CD8-positive, alpha-beta memory T cell (primary cell): ENCODE measurements at regions of chr10 and their contacts with region 1.

Region 1: DNA sequence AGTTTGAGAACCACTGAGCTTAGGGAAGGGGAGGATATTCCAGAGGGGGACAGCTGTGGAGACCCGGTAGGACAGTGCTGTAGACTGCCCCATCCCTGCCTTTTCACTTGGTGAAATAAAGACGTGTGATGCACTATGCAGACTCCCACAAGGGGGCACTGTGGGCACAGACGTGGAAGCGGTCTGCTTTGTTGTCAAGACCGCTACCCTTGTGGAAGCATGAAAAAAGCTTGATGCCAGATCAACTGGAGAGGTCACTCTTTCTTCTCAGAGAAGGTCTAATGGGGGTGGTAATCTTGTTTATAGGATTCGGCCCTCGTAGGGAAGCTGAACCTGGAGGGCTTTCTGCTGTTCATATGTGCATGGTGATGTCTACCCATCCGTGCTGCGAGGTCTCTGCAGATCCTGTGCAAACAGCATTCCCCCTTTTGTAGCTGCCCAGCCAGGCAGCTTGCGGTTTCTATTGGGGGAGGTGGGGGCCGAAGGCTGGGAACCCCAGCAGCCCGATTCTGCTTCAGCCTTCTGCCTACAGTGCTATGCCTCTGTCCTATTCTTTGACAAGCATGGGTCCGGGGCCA is 13.7 kb downstream of the RPS24 start:
- DNase-seq: peak; percentile 61 to 81 (median 69)
- H3K4me3 ChIP-seq: no peak overlapping the region
- H3K4me3 Mint-ChIP-seq: no peak overlapping the region
- H3K27ac ChIP-seq: no peak overlapping the region
- H3K27ac Mint-ChIP-seq: peak overlapping the region in 2 of 8 donors; percentile 27 to 62
- H3K4me1 ChIP-seq: peaks cover 4% of the 10 kb centered on the region
- H3K4me1 Mint-ChIP-seq: peaks cover 8 to 23% (median 19%) of the 10 kb centered on the region in 3 donors
- H3K27me3 ChIP-seq: no peaks in the 10 kb centered on the region
- H3K27me3 Mint-ChIP-seq: no peaks in the 10 kb centered on the region

Region 2: GRCh38 chr10:77959384-77959783 is 88.0 kb before region 1 on chr10:
- CTCF ChIA-PET with region 1: no interaction called
- POLR2A ChIA-PET with region 1: no interaction called
- DNase-seq: no peak
- H3K4me3 ChIP-seq: no peak overlapping the region
- H3K4me3 Mint-ChIP-seq: no peak overlapping the region
- H3K27ac ChIP-seq: no peak overlapping the region
- H3K27ac Mint-ChIP-seq: no peak overlapping the region
- H3K4me1 ChIP-seq: no peaks in the 10 kb centered on the region
- H3K4me1 Mint-ChIP-seq: no peaks in the 10 kb centered on the region
- H3K27me3 ChIP-seq: no peaks in the 10 kb centered on the region
- H3K27me3 Mint-ChIP-seq: peaks cover 10 to 27% of the 10 kb centered on the region in 2 donors

Region 3: DNA sequence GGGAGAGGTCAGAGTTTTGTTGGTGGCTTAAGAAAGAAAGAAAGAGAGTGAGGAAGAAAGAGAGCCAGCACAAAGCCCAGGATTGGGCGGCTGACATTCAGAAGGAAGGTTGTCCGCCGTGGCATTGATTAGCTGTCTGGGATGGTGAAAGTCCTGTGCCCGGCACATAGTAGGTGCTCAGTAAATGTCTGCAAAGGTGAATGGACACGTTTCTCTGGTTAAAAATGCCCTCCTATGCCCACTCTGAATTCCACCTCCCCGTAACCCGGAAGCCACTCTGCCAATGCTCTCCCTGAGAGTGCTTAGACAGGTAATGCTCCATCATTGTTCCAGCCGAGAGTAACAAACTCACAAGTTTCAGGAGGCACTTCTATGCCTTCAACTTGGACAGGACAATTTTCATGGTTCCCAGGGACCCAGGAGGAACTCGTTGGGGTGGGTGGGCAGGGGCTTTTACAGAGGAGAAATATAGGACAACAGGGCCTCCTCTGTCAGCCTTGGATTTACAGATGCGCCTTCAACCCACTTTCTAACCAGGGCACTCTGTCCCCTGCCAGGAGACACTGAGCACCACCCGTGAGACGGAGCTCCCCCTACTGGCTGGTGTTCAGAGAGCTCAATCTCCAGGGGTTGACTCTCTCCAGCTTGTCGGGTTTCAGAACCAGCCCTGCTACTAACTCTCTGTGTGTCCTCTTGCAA is 609.9 kb after region 1 on chr10:
- CTCF ChIA-PET with region 1: interaction called, 17 read pairs
- POLR2A ChIA-PET with region 1: no interaction called
- DNase-seq: peak; percentile 22 to 69 (median 31)
- H3K4me3 ChIP-seq: no peak overlapping the region
- H3K4me3 Mint-ChIP-seq: no peak overlapping the region
- H3K27ac ChIP-seq: no peak overlapping the region
- H3K27ac Mint-ChIP-seq: no peak overlapping the region
- H3K4me1 ChIP-seq: no peaks in the 10 kb centered on the region
- H3K4me1 Mint-ChIP-seq: no peaks in the 10 kb centered on the region
- H3K27me3 ChIP-seq: no peaks in the 10 kb centered on the region
- H3K27me3 Mint-ChIP-seq: peaks cover 14 to 40% of the 10 kb centered on the region in 2 donors

Region 4: DNA sequence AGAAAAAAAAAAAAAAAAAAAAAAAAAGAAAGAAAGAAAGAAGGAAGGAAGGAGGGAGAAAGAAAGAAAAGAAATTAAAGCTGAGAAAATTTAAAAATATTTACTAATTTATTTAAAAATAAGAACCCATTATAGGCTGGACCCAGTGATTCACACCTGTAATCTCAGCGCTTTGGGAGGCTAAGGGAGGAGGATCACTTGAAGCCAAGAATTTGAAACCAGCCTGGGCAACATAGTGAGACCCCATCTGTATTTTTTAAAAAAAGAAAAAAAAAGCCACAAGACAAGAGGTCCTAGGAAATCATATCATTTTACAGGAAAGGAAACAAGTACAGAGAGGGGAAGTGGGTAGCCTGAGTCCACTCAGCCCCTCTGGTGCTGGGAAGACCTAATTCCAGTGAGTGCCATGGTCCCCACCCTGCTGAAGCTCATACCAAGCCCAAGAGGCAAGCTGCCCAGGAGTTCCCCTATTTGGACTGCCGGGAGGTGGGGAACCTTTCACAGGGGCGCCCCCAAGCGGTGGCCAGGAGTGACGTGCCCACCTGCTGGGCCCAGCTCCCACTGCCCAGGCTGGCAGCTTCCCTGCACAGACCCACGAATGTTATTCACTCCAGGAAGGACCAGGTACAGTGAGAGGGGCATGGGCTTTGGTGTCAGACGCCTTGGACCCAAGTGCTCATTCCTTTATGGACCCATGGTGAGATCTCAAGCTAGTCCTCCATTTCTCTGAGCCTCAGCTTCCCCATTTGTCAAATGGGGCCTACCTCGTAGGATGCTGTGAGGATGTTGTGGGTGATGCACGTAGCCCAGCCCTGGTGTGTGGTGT is 1155.0 kb after region 1 on chr10:
- CTCF ChIA-PET with region 1: interaction called, 64 read pairs
- POLR2A ChIA-PET with region 1: no interaction called
- DNase-seq: no peak
- H3K4me3 ChIP-seq: no peak overlapping the region
- H3K4me3 Mint-ChIP-seq: no peak overlapping the region
- H3K27ac ChIP-seq: no peak overlapping the region
- H3K27ac Mint-ChIP-seq: no peak overlapping the region
- H3K4me1 ChIP-seq: no peaks in the 10 kb centered on the region
- H3K4me1 Mint-ChIP-seq: no peaks in the 10 kb centered on the region
- H3K27me3 ChIP-seq: no peaks in the 10 kb centered on the region
- H3K27me3 Mint-ChIP-seq: no peaks in the 10 kb centered on the region